ENCODE measurements at regions of chr18 and their contacts with region 1.

Region 1: DNA sequence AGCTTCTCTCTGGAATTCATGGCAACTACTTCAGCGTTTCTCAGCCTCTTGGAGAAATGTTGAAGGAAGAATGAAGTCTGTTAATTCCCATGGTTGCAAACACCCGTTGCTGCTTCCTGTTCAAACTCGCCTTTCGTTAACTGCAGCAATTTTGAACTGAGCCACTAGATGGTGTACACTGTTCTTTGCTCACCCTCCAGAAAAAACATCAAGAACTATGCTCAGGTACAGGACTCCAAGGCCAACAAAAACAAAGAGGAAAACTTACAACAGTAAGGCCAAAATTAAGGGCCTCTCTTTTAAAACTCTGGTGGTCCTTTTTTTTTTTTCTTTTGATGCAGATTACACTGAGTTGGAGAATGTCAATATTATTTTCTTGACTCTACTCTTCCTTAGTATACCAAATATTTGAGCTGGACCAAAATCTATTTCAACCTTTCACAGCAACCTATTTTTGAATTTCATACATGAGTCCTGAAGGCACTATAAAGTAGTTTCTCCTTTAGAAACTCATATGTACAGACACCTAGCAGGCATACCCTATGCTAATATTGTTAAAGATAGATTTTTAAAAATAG is 58.2 kb downstream of the KLHL14 start:
- DNase-seq: peak; percentile 81
- H3K4me3 ChIP-seq: no peak overlapping the region
- H3K27ac ChIP-seq: no peak overlapping the region
- H3K4me1 ChIP-seq: no peaks in the 10 kb centered on the region
- H3K27me3 ChIP-seq: peaks cover 2 to 5% of the 10 kb centered on the region in 2 experiments
- CTCF ChIP-seq: peak; percentile 67 to 70
- POLR2A ChIP-seq: no peak

Region 2: GRCh38 chr18:32552421-32553030 is 162.1 kb before region 1 on chr18:
- CTCF ChIA-PET with region 1: no interaction called
- POLR2A ChIA-PET with region 1: no interaction called
- dilution Hi-C with region 1: no loop called
- intact Hi-C with region 1: no loop called
- DNase-seq: peak; percentile 62
- H3K4me3 ChIP-seq: no peak overlapping the region
- H3K27ac ChIP-seq: no peak overlapping the region
- H3K4me1 ChIP-seq: no peaks in the 10 kb centered on the region
- H3K27me3 ChIP-seq: peaks cover 2 to 5% of the 10 kb centered on the region in 2 experiments
- CTCF ChIP-seq: peak; percentile 53 to 77
- POLR2A ChIP-seq: no peak

Region 3: GRCh38 chr18:32930695-32931301 is 216.1 kb after region 1 on chr18:
- CTCF ChIA-PET with region 1: interaction called, 30 read pairs
- POLR2A ChIA-PET with region 1: no interaction called
- dilution Hi-C with region 1: no loop called
- intact Hi-C with region 1: loop called (anchors 1 kb)
- DNase-seq: peak; percentile 47
- H3K4me3 ChIP-seq: no peak overlapping the region
- H3K27ac ChIP-seq: no peak overlapping the region
- H3K4me1 ChIP-seq: no peaks in the 10 kb centered on the region
- H3K27me3 ChIP-seq: no peaks in the 10 kb centered on the region
- CTCF ChIP-seq: peak; percentile 60 to 64
- POLR2A ChIP-seq: no peak

Region 4: DNA sequence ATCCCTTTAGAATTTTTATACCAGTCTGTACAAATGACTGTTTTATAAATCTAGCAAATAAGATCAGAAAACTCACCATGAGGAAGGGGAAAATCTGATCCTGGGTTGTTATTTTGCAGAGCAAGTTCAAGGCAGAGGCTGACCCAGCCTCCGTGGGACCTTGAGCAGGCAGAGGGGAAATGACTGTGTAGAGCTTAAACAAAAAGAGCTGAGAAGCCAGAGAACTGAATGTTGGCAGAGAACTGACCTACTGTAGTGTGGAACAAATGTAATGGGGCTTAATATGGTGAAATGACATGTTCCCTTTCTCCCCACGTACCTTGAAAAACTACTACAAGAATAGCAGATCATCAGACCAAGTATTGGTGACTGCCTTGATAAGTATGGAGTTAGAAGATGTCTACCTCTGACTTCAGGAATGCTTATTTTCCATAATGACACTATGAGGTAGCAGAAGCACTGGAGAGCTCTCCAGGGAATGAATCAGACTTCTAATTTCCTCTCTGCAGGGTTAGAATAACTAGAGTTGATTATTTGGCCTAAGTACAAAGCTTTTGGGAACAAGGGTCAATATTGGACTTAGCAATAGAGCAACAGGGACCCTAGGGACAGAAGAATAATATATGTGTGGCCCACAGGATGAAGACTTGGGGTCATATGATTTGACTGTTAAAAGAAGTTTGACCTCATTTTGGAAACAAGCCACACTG is 421.4 kb after region 1 on chr18:
- CTCF ChIA-PET with region 1: no interaction called
- POLR2A ChIA-PET with region 1: no interaction called
- dilution Hi-C with region 1: no loop called
- intact Hi-C with region 1: no loop called
- DNase-seq: peak; percentile 93
- H3K4me3 ChIP-seq: peak overlapping the region in 1 of 3 experiments; percentile 19
- H3K27ac ChIP-seq: peak overlapping the region; percentile 84
- H3K4me1 ChIP-seq: peaks cover 21% of the 10 kb centered on the region
- H3K27me3 ChIP-seq: no peaks in the 10 kb centered on the region
- CTCF ChIP-seq: no peak
- POLR2A ChIP-seq: peak; percentile 38

Measured in endothelial cell of umbilical vein (primary cell).